GM13976 (cell line): ENCODE measurements at regions of chr10 and their contacts with region 1.

Region 1: DNA sequence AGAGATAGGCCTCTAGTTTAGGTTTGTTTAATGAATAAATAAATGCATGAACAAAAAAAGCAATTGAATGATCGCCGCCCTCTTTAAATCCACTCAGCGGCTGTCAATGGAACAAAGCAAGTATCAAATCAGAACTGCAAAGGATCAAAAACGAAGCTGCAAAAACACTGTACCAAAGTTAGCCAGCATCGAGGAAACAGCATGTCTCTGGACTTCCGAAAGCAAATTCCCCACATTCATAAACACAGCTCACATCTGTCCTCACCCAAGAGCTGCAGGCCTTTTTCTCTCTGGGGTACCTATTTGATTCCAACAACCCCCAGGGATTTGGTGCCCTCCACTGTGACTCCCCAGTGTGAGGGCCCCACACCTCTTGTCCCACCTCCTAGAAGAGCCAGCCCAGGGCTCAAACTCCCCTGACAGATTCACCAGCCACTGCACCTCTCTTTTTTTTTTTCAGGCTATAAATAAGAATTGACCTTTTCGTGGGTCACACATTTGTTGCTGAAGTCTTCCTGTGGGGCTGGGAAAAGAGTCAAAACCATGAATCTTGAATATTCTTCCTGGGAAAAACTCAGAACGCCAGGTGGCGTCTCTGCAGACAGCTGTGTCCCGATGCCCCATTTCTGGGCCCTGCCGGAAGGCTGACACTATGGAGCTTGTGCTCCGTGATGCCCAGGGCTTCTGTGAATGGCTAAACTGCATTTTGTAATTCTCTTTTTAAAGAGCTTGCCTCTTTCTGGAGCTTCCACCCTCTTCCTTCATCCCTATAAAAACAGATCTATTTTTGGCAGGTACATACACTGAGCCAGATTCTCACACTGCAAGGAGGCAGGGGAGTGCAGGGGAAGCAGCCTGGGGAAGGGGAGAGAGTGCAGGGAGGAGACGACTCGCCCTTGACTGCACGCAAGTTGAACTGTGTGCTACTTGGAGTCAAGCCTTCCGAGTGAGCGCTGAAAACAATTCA is 51.7 kb downstream of the HSPA12A start:
- DNase-seq: no peak
- CTCF ChIP-seq: no peak

Region 2: DNA sequence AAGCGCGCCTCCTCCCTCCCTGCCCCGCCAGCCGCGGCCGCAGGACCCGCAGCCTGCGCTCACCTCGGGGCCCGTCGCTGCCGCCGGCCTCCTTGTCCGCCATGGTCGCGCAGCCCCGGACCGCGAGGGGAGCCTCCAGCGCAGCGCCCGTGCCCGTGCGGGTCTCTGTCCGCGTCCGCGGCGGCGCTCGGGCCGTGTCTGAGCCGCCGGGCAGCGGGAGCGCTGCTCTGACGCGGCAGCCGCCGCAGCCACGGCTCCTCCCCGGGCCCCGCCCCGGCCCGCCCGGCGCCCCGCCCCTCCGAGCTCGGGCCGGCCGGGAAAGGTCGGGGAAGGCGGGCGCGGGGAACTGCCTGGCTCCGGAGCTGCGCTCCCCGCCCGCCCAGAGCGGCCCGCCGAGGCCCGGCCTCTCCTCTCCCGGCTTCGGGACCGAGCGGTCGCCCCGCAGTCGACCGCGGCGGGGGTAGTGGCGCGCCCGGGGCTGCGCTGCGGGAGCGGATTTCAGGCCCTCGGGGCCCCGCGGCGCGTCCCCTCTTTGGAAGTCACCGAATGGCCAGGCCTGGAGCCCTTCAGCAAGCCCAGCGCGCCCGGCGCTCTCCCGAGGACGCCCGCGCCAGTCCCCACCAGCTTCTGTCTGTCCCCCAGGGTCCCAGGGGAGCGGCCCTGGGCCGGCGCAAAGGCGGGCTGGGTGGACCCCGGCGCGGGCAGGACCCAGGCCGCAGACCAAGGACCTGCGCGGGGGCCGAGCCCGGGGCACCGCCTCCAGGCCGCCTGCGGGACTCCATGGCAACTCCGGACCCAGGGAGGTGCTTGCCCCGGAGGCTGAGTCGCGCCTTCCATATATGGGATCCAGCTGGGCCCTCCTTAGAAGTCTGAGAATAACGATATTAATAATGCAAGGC is 52.0 kb after region 1 on chr10 and contains the start of gene HSPA12A:
- in situ Hi-C with region 1: no loop called
- DNase-seq: peak; percentile 89
- CTCF ChIP-seq: no peak

Region 3: DNA sequence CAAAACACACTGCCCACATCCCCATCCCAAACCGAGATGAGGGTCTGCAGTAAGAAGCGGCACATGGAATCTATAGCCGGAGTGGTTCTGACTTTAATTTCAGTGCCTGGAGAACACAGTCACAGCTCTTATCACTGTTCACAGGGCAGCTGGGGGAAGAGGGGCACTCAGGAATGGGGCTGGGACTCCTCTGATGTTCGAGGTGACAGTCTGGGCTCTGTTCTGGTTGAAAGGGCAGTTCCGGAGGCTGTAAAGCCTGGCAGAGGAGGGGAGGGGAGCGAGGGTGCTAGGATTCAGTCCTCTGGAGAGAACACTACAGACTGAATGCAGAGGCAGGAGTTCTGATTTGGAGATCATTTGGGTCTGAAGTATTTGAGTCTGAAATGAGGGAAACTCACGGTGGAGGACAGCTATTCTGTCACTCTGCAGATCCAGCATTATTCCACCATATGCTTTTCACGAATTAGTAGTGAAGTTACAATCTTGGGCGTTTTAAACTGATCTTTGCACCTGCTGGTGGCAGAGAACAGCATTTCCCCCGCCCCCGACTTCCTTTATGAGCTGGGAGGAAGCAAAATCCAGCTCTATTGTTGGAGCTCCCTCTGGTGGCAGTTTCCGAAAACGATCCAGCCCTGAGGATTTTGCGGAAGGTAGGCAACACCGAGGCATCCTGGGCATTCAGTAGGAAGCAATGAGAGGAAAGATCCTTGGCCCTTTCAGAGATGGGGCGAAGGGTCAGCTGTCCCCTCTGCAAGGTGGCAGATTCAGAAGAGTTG is 484.0 kb after region 1 on chr10:
- in situ Hi-C with region 1: loop called (anchors 10 kb)
- DNase-seq: peak; percentile 83
- CTCF ChIP-seq: peak; percentile 75

Region 4: GRCh38 chr10:117413928-117414618 is 723.4 kb after region 1 on chr10:
- in situ Hi-C with region 1: no loop called
- DNase-seq: no peak
- CTCF ChIP-seq: no peak